Astrocyte of the cerebellum (primary cell): ENCODE measurements at regions of chr4 and their contacts with region 1.

Region 1: DNA sequence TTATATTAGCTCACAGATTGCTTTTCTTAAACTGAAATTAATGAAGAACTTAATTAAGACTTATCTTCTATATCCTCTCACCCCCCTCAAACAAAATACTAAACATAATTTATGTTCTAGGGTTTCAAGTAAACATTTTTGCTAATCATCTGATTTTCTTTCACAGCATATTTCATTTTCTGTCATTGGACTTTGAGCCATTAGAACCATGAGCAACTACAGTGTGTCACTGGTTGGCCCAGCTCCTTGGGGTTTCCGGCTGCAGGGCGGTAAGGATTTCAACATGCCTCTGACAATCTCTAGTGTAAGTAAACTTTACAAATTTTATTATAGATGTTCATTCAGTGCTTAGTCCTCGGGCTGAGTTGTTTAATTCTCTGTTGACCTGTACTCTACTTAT is 3.3 kb downstream of the PDLIM5 start:
- DNase-seq: no peak
- H3K4me3 ChIP-seq: no peak overlapping the region
- CTCF ChIP-seq: no peak

Region 2: GRCh38 chr4:94497690-94498089 is 42.6 kb after region 1 on chr4:
- in situ Hi-C with region 1: loop called (anchors 5 kb)
- DNase-seq: no peak
- H3K4me3 ChIP-seq: no peak overlapping the region
- CTCF ChIP-seq: no peak